Panc1 (cell line): ENCODE measurements at regions of chr7 and their contacts with region 1.

Region 1: GRCh38 chr7:87312215-87312865 is 33.1 kb upstream of the CROT start:
- DNase-seq: peak; percentile 69
- ATAC-seq: peak; percentile 87
- H3K4me3 ChIP-seq: no peak overlapping the region
- H3K27ac ChIP-seq: no peak overlapping the region
- H3K4me1 ChIP-seq: no peaks in the 10 kb centered on the region
- H3K27me3 ChIP-seq: no peaks in the 10 kb centered on the region
- CTCF ChIP-seq: peak; percentile 95

Region 2: GRCh38 chr7:87234949-87235348 is 77.4 kb before region 1 on chr7:
- CTCF ChIA-PET with region 1: no interaction called
- POLR2A ChIA-PET with region 1: no interaction called
- in situ Hi-C with region 1: no loop called
- intact Hi-C with region 1: no loop called
- DNase-seq: no peak
- ATAC-seq: no peak
- H3K4me3 ChIP-seq: no peak overlapping the region
- H3K27ac ChIP-seq: no peak overlapping the region
- H3K4me1 ChIP-seq: no peaks in the 10 kb centered on the region
- H3K27me3 ChIP-seq: peaks cover 4% of the 10 kb centered on the region; the same call in 1 of the 2 replicates
- CTCF ChIP-seq: no peak

Region 3: DNA sequence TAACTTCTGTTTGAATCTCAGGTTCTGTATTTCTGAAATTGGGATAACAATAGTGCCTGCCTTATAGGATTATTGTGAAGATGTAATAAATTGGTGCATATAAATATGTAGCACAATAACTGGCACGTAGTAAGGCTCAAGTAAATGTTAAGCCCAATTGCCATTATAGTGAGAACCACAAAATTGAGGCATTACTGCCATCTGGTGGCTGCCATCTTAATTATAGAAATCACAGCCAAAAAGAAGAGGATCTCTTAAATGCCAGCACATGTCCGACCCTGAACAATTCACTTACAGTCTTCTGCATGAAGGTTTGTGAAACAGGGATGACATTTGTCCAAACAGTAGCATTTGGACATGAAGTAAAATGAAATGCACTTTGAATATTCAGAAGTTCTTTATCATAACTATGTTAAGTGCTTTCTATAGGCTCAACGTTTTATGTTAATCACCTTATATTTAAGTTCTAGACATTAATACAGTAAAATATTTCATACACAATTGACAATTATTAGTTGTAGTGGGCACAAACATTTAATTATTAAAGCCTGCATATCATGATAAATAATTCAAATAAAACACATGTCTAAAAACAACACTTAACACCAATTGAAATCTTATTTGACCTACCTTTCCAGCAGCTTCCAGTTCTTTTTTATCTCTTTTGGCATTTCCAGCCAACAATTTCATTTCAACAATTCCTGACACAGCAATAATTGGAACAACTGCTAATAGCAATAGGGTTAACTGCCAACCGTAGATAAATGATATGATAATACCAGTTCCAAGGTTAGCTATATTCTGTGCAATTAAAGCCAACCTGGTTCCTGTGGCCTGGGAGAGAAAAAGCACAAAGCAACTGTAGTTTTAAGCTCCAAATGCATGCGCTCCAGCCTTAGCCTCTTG is 104.6 kb after region 1 on chr7:
- CTCF ChIA-PET with region 1: no interaction called
- POLR2A ChIA-PET with region 1: no interaction called
- in situ Hi-C with region 1: no loop called
- intact Hi-C with region 1: loop called (anchors 1 kb)
- DNase-seq: peak; percentile 68
- ATAC-seq: peak; percentile 87
- H3K4me3 ChIP-seq: no peak overlapping the region
- H3K27ac ChIP-seq: no peak overlapping the region
- H3K4me1 ChIP-seq: no peaks in the 10 kb centered on the region
- H3K27me3 ChIP-seq: no peaks in the 10 kb centered on the region
- CTCF ChIP-seq: peak; percentile 51; the same call in 1 of the 2 replicates